ENCODE measurements at regions of chr7 and their contacts with region 1.

Region 1: DNA sequence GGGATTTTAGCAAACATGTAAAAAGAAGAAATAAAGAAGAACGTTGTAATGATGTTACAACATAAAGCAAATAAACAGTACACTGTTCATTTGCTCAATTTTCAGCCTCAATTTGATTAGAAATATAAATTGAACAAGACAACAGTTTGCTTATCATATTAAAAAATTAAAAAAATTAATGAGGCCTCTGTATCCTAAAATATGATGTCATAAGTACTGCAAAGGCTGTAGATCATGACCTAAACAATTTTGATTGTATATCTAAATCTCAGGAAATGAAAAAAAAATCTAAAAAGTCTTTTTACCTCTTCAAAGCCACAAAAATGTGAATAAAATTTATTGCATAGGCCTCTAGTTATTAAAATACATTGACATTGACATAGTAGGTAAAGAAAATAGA is 786.3 kb downstream of the NXPH1 start:
- DNase-seq: no peak
- ATAC-seq: no peak
- H3K4me3 Mint-ChIP-seq: no peak overlapping the region
- H3K27ac Mint-ChIP-seq: no peak overlapping the region
- H3K4me1 Mint-ChIP-seq: no peaks in the 10 kb centered on the region
- H3K27me3 Mint-ChIP-seq: no peaks in the 10 kb centered on the region

Region 2: GRCh38 chr7:9231630-9232121 is 12.0 kb after region 1 on chr7:
- CTCF ChIA-PET with region 1: no interaction called
- POLR2A ChIA-PET with region 1: no interaction called
- intact Hi-C with region 1: loop called in 1 of 2 experiments (anchors 1 kb)
- DNase-seq: no peak
- ATAC-seq: no peak
- H3K4me3 Mint-ChIP-seq: no peak overlapping the region
- H3K27ac Mint-ChIP-seq: no peak overlapping the region
- H3K4me1 Mint-ChIP-seq: no peaks in the 10 kb centered on the region
- H3K27me3 Mint-ChIP-seq: no peaks in the 10 kb centered on the region